Left cardiac atrium (tissue), 4 donors: ENCODE measurements at regions of chr14 and their contacts with region 1.

Region 1: DNA sequence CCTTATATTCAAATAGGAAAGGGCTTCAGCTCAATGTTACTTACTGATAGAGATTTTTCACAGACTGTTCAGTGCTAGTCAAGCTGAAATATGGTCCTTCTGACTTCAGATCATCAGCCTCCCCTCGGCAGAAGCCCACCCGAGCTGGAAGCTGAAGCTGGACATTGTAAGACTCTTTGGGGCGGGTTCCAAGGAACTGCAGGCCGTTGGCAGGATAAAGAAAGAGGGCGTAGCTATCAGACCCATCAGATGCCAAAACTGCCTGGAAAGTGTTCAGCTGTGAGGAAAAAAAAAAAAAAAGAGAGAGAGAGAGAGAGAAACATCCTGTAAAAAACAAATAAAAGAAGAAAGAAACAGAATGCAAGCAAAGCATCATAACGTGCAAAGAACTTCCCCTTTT is 8.8 kb downstream of the NID2 start:
- DNase-seq: no peak
- ATAC-seq: peak; percentile 62

Region 2: GRCh38 chr14:52013984-52014600 is 46.0 kb before region 1 on chr14:
- intact Hi-C with region 1: loop called in 1 of 2 experiments (anchors 5 kb)
- DNase-seq: no peak
- ATAC-seq: peak in 1 of 2 donors; percentile 28

Region 3: GRCh38 chr14:52279405-52279804 is 219.3 kb after region 1 on chr14:
- intact Hi-C with region 1: no loop called
- DNase-seq: no peak
- ATAC-seq: peak in 1 of 2 donors; percentile 76